Panc1 (cell line): ENCODE measurements at regions of chr1 and their contacts with region 1.

Region 1: DNA sequence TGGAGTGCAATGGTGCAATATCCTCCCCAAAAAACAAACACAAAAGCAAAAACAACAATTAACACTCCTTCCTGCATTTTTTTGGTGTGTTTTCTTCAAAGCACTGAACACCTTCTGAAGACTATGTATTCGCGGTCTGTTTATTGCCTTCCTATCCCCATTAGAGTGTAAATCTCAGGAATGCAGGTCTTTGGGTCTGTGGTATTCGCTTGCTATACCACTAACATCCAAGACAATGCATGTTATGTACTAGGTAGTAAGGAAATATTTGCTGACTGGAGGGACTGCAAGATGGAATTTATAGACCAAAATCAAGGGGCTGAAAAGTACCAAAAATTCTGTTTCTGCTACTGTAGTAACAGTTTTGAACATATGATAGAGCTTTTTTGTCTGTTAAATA is 299.4 kb downstream of the RYR2 start:
- DNase-seq: no peak
- ATAC-seq: no peak
- H3K4me3 ChIP-seq: no peak overlapping the region
- H3K27ac ChIP-seq: no peak overlapping the region
- H3K4me1 ChIP-seq: no peaks in the 10 kb centered on the region
- H3K27me3 ChIP-seq: no peaks in the 10 kb centered on the region; the same call in 1 of the 2 replicates
- CTCF ChIP-seq: no peak

Region 2: GRCh38 chr1:237235091-237235490 is 106.3 kb before region 1 on chr1:
- CTCF ChIA-PET with region 1: no interaction called
- POLR2A ChIA-PET with region 1: no interaction called
- in situ Hi-C with region 1: no loop called
- intact Hi-C with region 1: no loop called
- DNase-seq: no peak
- ATAC-seq: no peak
- H3K4me3 ChIP-seq: no peak overlapping the region
- H3K27ac ChIP-seq: no peak overlapping the region
- H3K4me1 ChIP-seq: no peaks in the 10 kb centered on the region
- H3K27me3 ChIP-seq: no peaks in the 10 kb centered on the region
- CTCF ChIP-seq: no peak

Region 3: GRCh38 chr1:237358555-237358954 is 17.2 kb after region 1 on chr1:
- CTCF ChIA-PET with region 1: no interaction called
- POLR2A ChIA-PET with region 1: interaction called, 12 read pairs
- in situ Hi-C with region 1: no loop called
- intact Hi-C with region 1: no loop called
- DNase-seq: no peak
- ATAC-seq: no peak
- H3K4me3 ChIP-seq: no peak overlapping the region
- H3K27ac ChIP-seq: no peak overlapping the region
- H3K4me1 ChIP-seq: no peaks in the 10 kb centered on the region
- H3K27me3 ChIP-seq: no peaks in the 10 kb centered on the region
- CTCF ChIP-seq: no peak